ENCODE measurements at regions of chr3 and their contacts with region 1.

Region 1: GRCh38 chr3:151203051-151203420 is at the start of gene GPR171:
- DNase-seq: peak; percentile 82
- ATAC-seq: peak; percentile 66
- H3K4me3 Mint-ChIP-seq: peak within 1 kb of the TSS; percentile 83
- H3K27ac Mint-ChIP-seq: peak within 1 kb of the TSS; percentile 96
- H3K4me1 Mint-ChIP-seq: peaks cover 63% of the 10 kb centered on the region
- H3K27me3 Mint-ChIP-seq: no peaks in the 10 kb centered on the region
- total RNA-seq, gene GPR171: 84.9 to 111 TPM

Region 2: DNA sequence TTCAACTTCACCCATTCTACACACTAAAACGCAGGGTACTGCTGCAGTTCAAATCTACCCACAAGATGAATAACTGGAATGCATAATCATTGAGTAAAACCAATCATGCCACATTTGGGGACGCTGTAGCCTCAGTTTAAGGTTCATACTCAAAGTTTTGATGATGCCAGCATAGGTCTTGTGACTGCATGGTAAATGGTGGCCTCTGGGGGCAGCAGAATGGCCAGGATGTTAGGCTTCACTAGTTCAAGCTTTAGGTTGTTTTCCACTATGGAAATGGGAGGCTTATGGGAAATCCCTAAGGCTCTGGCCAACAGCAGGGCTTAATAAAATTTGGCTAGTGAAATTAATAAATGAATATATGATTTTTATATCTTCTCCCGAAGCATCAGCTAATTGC is 899.3 kb before region 1 on chr3:
- CTCF ChIA-PET with region 1: no interaction called
- POLR2A ChIA-PET with region 1: no interaction called
- intact Hi-C with region 1: no loop called
- DNase-seq: peak; percentile 47
- ATAC-seq: peak; percentile 75
- H3K4me3 Mint-ChIP-seq: no peak overlapping the region
- H3K27ac Mint-ChIP-seq: no peak overlapping the region
- H3K4me1 Mint-ChIP-seq: no peaks in the 10 kb centered on the region
- H3K27me3 Mint-ChIP-seq: peaks cover 20% of the 10 kb centered on the region

Region 3: GRCh38 chr3:150408221-150409102 is 794.6 kb before region 1 on chr3 and contains the start of gene TSC22D2:
- CTCF ChIA-PET with region 1: no interaction called
- POLR2A ChIA-PET with region 1: no interaction called
- intact Hi-C with region 1: loop called in 1 of 2 experiments (anchors 2 kb)
- DNase-seq: peak; percentile 96
- ATAC-seq: peak; percentile 73
- H3K4me3 Mint-ChIP-seq: peak within 1 kb of the TSS; percentile 77
- H3K27ac Mint-ChIP-seq: peak within 1 kb of the TSS; percentile 100
- H3K4me1 Mint-ChIP-seq: peaks cover 21% of the 10 kb centered on the region
- H3K27me3 Mint-ChIP-seq: no peaks in the 10 kb centered on the region
- total RNA-seq, gene TSC22D2: 12.0 to 20.2 TPM

Region 4: DNA sequence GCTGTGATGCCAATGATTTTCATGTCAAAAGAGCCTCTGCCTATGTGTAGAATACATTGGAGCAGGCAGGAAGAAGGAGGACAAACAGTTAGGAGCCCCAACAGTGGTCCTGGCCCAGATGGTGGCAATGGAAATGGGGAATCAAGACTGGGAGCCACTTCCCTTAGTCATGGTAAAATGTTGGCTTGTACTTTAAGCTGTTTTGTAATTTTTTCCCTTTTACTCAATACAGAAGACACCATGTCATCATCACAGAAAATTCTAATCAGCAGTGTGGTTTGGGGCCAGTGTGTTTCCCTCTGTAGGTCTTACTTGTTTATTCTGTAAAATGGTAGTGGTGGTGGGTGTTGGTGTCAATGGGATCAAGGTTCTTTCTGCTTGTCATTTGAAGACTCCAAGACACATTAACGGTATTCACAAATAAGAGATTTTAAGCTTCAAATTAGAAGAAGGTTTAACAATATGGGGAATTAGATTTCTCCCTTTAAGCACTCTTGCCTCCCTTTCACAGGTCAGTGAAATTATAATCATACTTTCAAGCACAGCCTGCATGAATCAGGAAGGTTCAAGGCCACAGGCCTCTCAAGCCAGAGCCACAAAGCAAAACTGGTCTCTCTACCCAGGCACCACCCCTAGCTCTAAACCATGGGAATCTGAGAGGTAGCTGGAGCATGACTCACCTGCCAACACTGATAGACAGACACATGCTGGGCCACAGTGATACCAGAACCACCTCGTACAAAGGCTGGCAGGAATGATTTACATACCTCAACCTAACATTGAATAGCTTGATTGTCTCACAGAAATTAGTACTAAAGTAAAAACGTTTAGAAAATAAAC is 464.9 kb before region 1 on chr3:
- CTCF ChIA-PET with region 1: interaction called, 4 read pairs
- POLR2A ChIA-PET with region 1: no interaction called
- intact Hi-C with region 1: loop called (anchors 1 to 2 kb)
- DNase-seq: peak; percentile 77
- ATAC-seq: peak; percentile 73
- H3K4me3 Mint-ChIP-seq: peak overlapping the region; percentile 40
- H3K27ac Mint-ChIP-seq: peak overlapping the region; percentile 93
- H3K4me1 Mint-ChIP-seq: peaks cover 72% of the 10 kb centered on the region
- H3K27me3 Mint-ChIP-seq: no peaks in the 10 kb centered on the region

Region 5: GRCh38 chr3:151168269-151169094 is 34.6 kb before region 1 on chr3:
- CTCF ChIA-PET with region 1: interaction called, 9 read pairs
- POLR2A ChIA-PET with region 1: interaction called, 3 read pairs
- intact Hi-C with region 1: loop called (anchors 1 kb)
- DNase-seq: peak; percentile 92
- ATAC-seq: peak; percentile 64
- H3K4me3 Mint-ChIP-seq: no peak overlapping the region
- H3K27ac Mint-ChIP-seq: no peak overlapping the region
- H3K4me1 Mint-ChIP-seq: peaks cover 44% of the 10 kb centered on the region
- H3K27me3 Mint-ChIP-seq: no peaks in the 10 kb centered on the region

Region 6: GRCh38 chr3:151227807-151228665 is 25.0 kb after region 1 on chr3:
- CTCF ChIA-PET with region 1: interaction called, 61 read pairs
- POLR2A ChIA-PET with region 1: interaction called, 9 read pairs
- intact Hi-C with region 1: loop called (anchors 1 to 2 kb)
- DNase-seq: peak; percentile 87
- ATAC-seq: peak; percentile 75
- H3K4me3 Mint-ChIP-seq: no peak overlapping the region
- H3K27ac Mint-ChIP-seq: peak overlapping the region; percentile 64
- H3K4me1 Mint-ChIP-seq: peaks cover 58% of the 10 kb centered on the region
- H3K27me3 Mint-ChIP-seq: no peaks in the 10 kb centered on the region

Region 7: GRCh38 chr3:151316267-151316991 is 113.4 kb after region 1 on chr3 and contains the start of gene GPR87:
- CTCF ChIA-PET with region 1: no interaction called
- POLR2A ChIA-PET with region 1: interaction called, 4 read pairs
- intact Hi-C with region 1: loop called (anchors 1 kb)
- DNase-seq: peak; percentile 50
- ATAC-seq: peak; percentile 83
- H3K4me3 Mint-ChIP-seq: peak within 1 kb of the TSS; percentile 50
- H3K27ac Mint-ChIP-seq: peak within 1 kb of the TSS; percentile 90
- H3K4me1 Mint-ChIP-seq: peaks cover 47% of the 10 kb centered on the region
- H3K27me3 Mint-ChIP-seq: peaks cover 2% of the 10 kb centered on the region
- total RNA-seq, gene GPR87: 2.3 to 2.5 TPM

Region 8: GRCh38 chr3:152258448-152259393 is 1055.7 kb after region 1 on chr3:
- CTCF ChIA-PET with region 1: no interaction called
- POLR2A ChIA-PET with region 1: interaction called, 3 read pairs
- intact Hi-C with region 1: loop called in 1 of 2 experiments (anchors 2 kb)
- DNase-seq: peak; percentile 82
- ATAC-seq: peak; percentile 81
- H3K4me3 Mint-ChIP-seq: peak overlapping the region; percentile 61
- H3K27ac Mint-ChIP-seq: peak overlapping the region; percentile 91
- H3K4me1 Mint-ChIP-seq: peaks cover 90% of the 10 kb centered on the region
- H3K27me3 Mint-ChIP-seq: no peaks in the 10 kb centered on the region

Measured in activated CD4-positive, alpha-beta T cell treated with anti-CD3 and anti-CD28 coated beads for 36 hours (primary cell).